Panc1 (cell line): ENCODE measurements at regions of chrX and their contacts with region 1.

Region 1: GRCh38 chrX:25144043-25144940 is 128.5 kb upstream of the ARX start:
- DNase-seq: peak; percentile 12
- ATAC-seq: peak; percentile 62; the same call in 1 of the 2 replicates
- H3K4me3 ChIP-seq: no peak overlapping the region
- H3K27ac ChIP-seq: no peak overlapping the region
- H3K4me1 ChIP-seq: no peaks in the 10 kb centered on the region
- H3K27me3 ChIP-seq: no peaks in the 10 kb centered on the region
- CTCF ChIP-seq: peak; percentile 73

Region 2: DNA sequence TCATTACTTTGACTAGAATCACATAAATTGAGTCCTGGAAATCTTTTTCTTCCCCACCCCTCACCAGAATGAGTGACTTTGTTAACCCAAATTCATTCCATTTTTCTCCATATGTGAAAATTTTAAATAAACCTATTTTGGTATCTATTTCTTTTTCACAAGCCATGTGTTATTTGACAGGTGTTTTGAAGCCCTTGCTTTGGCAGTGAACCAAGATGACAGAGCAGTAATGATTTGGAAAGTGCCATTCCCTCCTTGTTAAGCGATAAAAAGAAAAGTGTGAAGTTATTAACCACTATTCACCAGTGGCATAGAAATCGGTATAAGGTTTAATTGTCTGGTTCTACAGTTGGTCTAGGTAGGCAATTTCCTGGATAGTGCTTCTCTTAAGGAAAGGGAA is 384.5 kb before region 1 on chrX:
- CTCF ChIA-PET with region 1: no interaction called
- POLR2A ChIA-PET with region 1: no interaction called
- in situ Hi-C with region 1: no loop called
- intact Hi-C with region 1: loop called (anchors 5 kb)
- DNase-seq: no peak
- ATAC-seq: no peak
- H3K4me3 ChIP-seq: no peak overlapping the region
- H3K27ac ChIP-seq: no peak overlapping the region
- H3K4me1 ChIP-seq: no peaks in the 10 kb centered on the region
- H3K27me3 ChIP-seq: no peaks in the 10 kb centered on the region
- CTCF ChIP-seq: no peak

Region 3: GRCh38 chrX:24838629-24839028 is 305.7 kb before region 1 on chrX:
- CTCF ChIA-PET with region 1: interaction called, 6 read pairs
- POLR2A ChIA-PET with region 1: no interaction called
- in situ Hi-C with region 1: no loop called
- intact Hi-C with region 1: loop called (anchors 5 kb)
- DNase-seq: no peak
- ATAC-seq: no peak
- H3K4me3 ChIP-seq: no peak overlapping the region
- H3K27ac ChIP-seq: no peak overlapping the region
- H3K4me1 ChIP-seq: no peaks in the 10 kb centered on the region
- H3K27me3 ChIP-seq: no peaks in the 10 kb centered on the region
- CTCF ChIP-seq: peak; percentile 44; the same call in 1 of the 2 replicates

Region 4: DNA sequence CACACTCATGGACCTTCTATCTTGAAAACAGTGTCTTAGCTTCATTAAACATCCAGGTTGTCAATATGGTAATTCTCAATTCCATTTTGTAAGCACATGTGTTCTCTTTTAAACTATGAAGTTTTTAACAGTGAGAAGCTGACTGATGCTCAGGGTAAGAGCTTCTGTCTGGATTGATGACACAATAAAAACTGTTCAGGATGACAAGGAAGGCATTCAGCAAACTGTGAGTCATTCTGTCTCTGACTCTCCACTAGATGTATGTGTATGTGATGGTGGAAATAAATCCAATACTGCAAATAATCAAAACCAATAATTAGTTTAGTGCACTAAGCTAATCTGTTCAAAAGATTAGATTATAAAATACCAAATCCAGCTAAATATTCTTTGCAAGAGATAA is 13.2 kb before region 1 on chrX:
- CTCF ChIA-PET with region 1: no interaction called
- POLR2A ChIA-PET with region 1: no interaction called
- in situ Hi-C with region 1: no loop called
- intact Hi-C with region 1: no loop called
- DNase-seq: no peak
- ATAC-seq: no peak
- H3K4me3 ChIP-seq: no peak overlapping the region
- H3K27ac ChIP-seq: no peak overlapping the region
- H3K4me1 ChIP-seq: no peaks in the 10 kb centered on the region
- H3K27me3 ChIP-seq: no peaks in the 10 kb centered on the region; the same call in 1 of the 2 replicates
- CTCF ChIP-seq: no peak